PC-3 (cell line): ENCODE measurements at regions of chrX and their contacts with region 1.

Region 1: DNA sequence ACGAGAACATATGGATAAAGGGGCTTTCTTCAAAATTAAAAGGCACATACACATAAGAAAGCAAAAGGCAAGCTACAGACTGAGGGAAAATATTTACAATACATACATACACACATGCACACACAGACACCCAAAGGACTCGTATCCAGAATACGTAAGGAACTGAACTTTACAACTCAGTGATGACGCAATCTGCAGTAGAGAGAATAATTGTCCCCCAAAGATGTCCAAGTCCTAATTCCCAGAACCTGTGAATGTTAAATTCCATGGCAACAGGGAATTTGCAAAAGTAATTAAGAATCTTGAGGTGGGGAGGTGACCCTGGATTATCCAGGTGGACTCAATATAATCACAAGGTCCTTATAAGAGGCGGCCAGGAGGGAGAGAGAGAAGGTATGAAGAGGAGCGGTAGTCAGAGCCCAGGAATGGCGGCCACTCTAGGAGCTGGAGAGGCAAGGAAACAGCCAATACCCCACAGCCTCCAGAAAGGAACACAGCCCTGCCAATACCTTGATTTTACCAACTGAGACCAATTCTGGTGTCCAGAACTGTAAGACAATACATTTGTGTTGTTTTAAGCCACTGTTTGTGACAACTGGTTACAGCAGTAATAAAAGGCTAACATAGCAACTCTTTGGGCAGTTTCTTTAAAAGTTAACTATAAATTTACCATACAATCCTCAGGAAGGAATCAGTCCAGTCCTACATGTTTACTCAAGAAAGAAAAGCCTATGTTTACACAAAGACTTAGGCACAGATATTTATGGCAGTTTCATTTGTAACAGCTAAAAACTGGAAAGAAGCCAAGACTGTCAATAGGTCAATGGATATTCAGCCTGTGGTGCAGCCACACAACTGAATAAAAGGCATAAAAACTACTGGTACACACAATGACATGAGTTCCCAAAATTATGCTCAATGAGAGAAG is 27.3 kb upstream of the STS start:
- DNase-seq: peak; percentile 89
- ATAC-seq: peak; percentile 86
- H3K4me3 ChIP-seq: peak overlapping the region; percentile 51
- H3K27ac ChIP-seq: peak overlapping the region; percentile 99
- H3K4me1 ChIP-seq: peaks cover 54% of the 10 kb centered on the region
- H3K27me3 ChIP-seq: no peaks in the 10 kb centered on the region
- CTCF ChIP-seq: no peak

Region 2: GRCh38 chrX:7068939-7069371 is 51.3 kb before region 1 on chrX:
- CTCF ChIA-PET with region 1: no interaction called
- POLR2A ChIA-PET with region 1: no interaction called
- intact Hi-C with region 1: no loop called
- DNase-seq: no peak
- ATAC-seq: no peak
- H3K4me3 ChIP-seq: no peak overlapping the region
- H3K27ac ChIP-seq: no peak overlapping the region
- H3K4me1 ChIP-seq: no peaks in the 10 kb centered on the region
- H3K27me3 ChIP-seq: no peaks in the 10 kb centered on the region
- CTCF ChIP-seq: peak; percentile 31; the same call in 1 of the 2 replicates

Region 3: GRCh38 chrX:7083468-7084396 is 36.5 kb before region 1 on chrX:
- CTCF ChIA-PET with region 1: no interaction called
- POLR2A ChIA-PET with region 1: no interaction called
- intact Hi-C with region 1: loop called (anchors 2 kb)
- DNase-seq: peak; percentile 89
- ATAC-seq: peak; percentile 99
- H3K4me3 ChIP-seq: no peak overlapping the region
- H3K27ac ChIP-seq: peak overlapping the region; percentile 36
- H3K4me1 ChIP-seq: peaks cover 13% of the 10 kb centered on the region
- H3K27me3 ChIP-seq: no peaks in the 10 kb centered on the region
- CTCF ChIP-seq: no peak

Region 4: DNA sequence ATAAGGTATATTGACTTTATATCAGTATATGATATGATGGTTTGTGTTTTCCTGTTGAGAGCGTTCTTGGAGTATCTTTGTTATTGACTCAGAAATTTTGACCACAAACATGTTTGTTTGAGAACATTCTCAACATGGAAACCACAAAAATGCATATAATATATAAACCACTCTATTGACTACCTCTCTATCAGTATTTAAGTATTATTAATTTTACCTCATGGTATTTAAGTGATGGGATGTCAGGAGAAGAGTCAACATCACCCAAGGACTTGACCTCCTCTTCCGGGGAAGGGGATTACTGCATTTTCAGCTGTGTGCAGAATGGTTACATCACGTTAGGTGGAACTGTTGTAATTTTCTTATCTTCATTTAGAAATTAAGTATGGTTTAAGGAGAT is 82.0 kb after region 1 on chrX:
- CTCF ChIA-PET with region 1: no interaction called
- POLR2A ChIA-PET with region 1: no interaction called
- intact Hi-C with region 1: loop called (anchors 1 kb)
- DNase-seq: peak; percentile 65
- ATAC-seq: peak; percentile 68
- H3K4me3 ChIP-seq: no peak overlapping the region
- H3K27ac ChIP-seq: no peak overlapping the region
- H3K4me1 ChIP-seq: peaks cover 7% of the 10 kb centered on the region; the same call in 1 of the 2 replicates
- H3K27me3 ChIP-seq: no peaks in the 10 kb centered on the region
- CTCF ChIP-seq: no peak